CD8-positive, alpha-beta T cell (primary cell): ENCODE measurements at regions of chr7 and their contacts with region 1.

Region 1: GRCh38 chr7:107879400-107880035 is 11.5 kb upstream of the DLD start:
- DNase-seq: peak in 3 of 9 experiments; percentile 36 to 72 (median 66)
- ATAC-seq: peak; percentile 73
- H3K4me3 ChIP-seq: no peak overlapping the region
- H3K4me3 Mint-ChIP-seq: no peak overlapping the region
- H3K27ac ChIP-seq: no peak overlapping the region
- H3K27ac Mint-ChIP-seq: no peak overlapping the region
- H3K4me1 ChIP-seq: peaks cover 7% of the 10 kb centered on the region
- H3K4me1 Mint-ChIP-seq: peaks cover 18% of the 10 kb centered on the region
- H3K27me3 ChIP-seq: no peaks in the 10 kb centered on the region
- H3K27me3 Mint-ChIP-seq: peaks cover 12% of the 10 kb centered on the region
- CTCF ChIP-seq: peak; percentile 80

Region 2: GRCh38 chr7:106947244-106947728 is 932.2 kb before region 1 on chr7:
- CTCF ChIA-PET with region 1: no interaction called
- POLR2A ChIA-PET with region 1: no interaction called
- intact Hi-C with region 1: loop called in 1 of 2 experiments (anchors 10 kb)
- DNase-seq: peak in 5 of 9 experiments; percentile 1 to 67 (median 37)
- ATAC-seq: peak; percentile 66
- H3K4me3 ChIP-seq: no peak overlapping the region
- H3K4me3 Mint-ChIP-seq: no peak overlapping the region
- H3K27ac ChIP-seq: no peak overlapping the region
- H3K27ac Mint-ChIP-seq: no peak overlapping the region
- H3K4me1 ChIP-seq: no peaks in the 10 kb centered on the region
- H3K4me1 Mint-ChIP-seq: no peaks in the 10 kb centered on the region
- H3K27me3 ChIP-seq: no peaks in the 10 kb centered on the region
- H3K27me3 Mint-ChIP-seq: no peaks in the 10 kb centered on the region
- CTCF ChIP-seq: peak; percentile 39

Region 3: DNA sequence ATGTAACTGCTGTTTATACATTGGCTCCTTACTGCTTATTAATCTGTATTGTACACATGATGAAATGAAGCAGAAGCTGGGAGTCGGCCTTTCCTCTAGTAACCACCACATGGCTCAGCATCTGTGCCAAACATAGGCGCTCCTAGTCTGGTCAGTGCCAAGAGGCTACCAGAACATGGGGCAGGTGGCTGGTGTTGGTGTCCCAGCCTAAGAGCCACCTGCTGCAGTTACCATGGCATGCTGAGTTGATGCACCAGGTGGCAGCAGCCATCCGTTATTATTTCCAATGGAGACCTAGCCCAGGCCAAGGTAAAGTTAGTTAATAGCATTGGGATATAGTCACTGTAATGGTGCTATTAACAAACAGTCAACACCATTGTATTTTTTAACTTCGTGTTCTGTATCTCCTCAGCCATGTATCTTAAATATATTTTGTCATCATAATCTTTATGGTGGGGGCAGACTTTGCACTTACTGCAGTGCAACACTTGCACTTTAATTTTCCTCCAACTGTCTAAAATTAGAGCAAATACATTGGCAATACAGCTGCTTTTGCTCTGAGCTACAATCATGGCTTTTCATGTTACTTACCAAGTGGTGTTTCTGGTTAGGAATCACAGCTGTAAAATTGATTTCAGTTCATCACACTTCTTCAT is 677.6 kb before region 1 on chr7:
- CTCF ChIA-PET with region 1: interaction called, 3 read pairs
- POLR2A ChIA-PET with region 1: no interaction called
- intact Hi-C with region 1: loop called in 1 of 2 experiments (anchors 2 kb)
- DNase-seq: peak in 4 of 9 experiments; percentile 16 to 48 (median 37)
- ATAC-seq: peak; percentile 57
- H3K4me3 ChIP-seq: no peak overlapping the region
- H3K4me3 Mint-ChIP-seq: no peak overlapping the region
- H3K27ac ChIP-seq: no peak overlapping the region
- H3K27ac Mint-ChIP-seq: no peak overlapping the region
- H3K4me1 ChIP-seq: no peaks in the 10 kb centered on the region
- H3K4me1 Mint-ChIP-seq: no peaks in the 10 kb centered on the region
- H3K27me3 ChIP-seq: no peaks in the 10 kb centered on the region
- H3K27me3 Mint-ChIP-seq: no peaks in the 10 kb centered on the region
- CTCF ChIP-seq: peak; percentile 37

Region 4: GRCh38 chr7:107563775-107564552 is 315.6 kb before region 1 on chr7 and contains the starts of genes COG5 and DUS4L:
- CTCF ChIA-PET with region 1: interaction called, 3 read pairs
- POLR2A ChIA-PET with region 1: no interaction called
- intact Hi-C with region 1: loop called in 1 of 2 experiments (anchors 5 kb)
- DNase-seq: peak; percentile 73 to 93 (median 86)
- ATAC-seq: peak; percentile 83
- H3K4me3 ChIP-seq: peak within 1 kb of the TSS; percentile 91 to 97
- H3K4me3 Mint-ChIP-seq: peak within 1 kb of the TSS; percentile 80
- H3K27ac ChIP-seq: peak within 1 kb of the TSS; percentile 95 to 96
- H3K27ac Mint-ChIP-seq: peak within 1 kb of the TSS; percentile 89
- H3K4me1 ChIP-seq: peaks cover 46% of the 10 kb centered on the region
- H3K4me1 Mint-ChIP-seq: peaks cover 65% of the 10 kb centered on the region
- H3K27me3 ChIP-seq: no peaks in the 10 kb centered on the region
- H3K27me3 Mint-ChIP-seq: no peaks in the 10 kb centered on the region
- CTCF ChIP-seq: no peak
- total RNA-seq, gene COG5: 45.7 to 46.8 TPM
- total RNA-seq, gene DUS4L: 13.1 to 16.4 TPM

Region 5: DNA sequence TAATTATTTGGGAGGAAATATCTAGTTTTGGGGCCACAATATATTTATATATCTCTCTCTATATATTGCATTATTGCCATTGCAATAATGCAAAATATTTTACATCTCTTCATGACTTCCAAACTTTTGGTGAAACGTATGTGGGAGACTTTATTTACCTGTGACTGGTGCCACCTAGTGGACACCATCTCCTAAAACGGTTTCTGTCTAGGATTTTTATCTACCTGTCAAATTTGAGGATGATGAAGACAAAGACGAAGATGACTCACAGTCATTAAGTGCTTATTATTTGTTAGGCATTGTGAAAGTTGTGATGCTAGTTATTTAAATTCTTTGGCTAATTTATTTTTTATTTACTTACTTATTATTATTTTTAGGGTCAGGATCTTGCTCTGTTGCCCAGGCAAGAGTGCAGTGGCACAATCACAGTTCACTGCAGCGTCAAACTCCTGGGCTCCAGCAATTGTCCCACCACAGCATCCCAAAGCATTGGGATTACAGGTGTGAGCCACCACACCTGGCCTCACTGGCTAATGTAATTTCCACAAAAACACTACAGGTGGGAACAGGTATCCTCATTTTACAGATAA is 154.3 kb before region 1 on chr7:
- CTCF ChIA-PET with region 1: interaction called, 23 read pairs
- POLR2A ChIA-PET with region 1: no interaction called
- intact Hi-C with region 1: loop called in 1 of 2 experiments (anchors 1 kb)
- DNase-seq: peak in 8 of 9 experiments; percentile 15 to 77 (median 48)
- ATAC-seq: peak; percentile 38
- H3K4me3 ChIP-seq: no peak overlapping the region
- H3K4me3 Mint-ChIP-seq: no peak overlapping the region
- H3K27ac ChIP-seq: no peak overlapping the region
- H3K27ac Mint-ChIP-seq: no peak overlapping the region
- H3K4me1 ChIP-seq: no peaks in the 10 kb centered on the region
- H3K4me1 Mint-ChIP-seq: no peaks in the 10 kb centered on the region
- H3K27me3 ChIP-seq: no peaks in the 10 kb centered on the region
- H3K27me3 Mint-ChIP-seq: peaks cover 15% of the 10 kb centered on the region
- CTCF ChIP-seq: peak; percentile 84

Region 6: DNA sequence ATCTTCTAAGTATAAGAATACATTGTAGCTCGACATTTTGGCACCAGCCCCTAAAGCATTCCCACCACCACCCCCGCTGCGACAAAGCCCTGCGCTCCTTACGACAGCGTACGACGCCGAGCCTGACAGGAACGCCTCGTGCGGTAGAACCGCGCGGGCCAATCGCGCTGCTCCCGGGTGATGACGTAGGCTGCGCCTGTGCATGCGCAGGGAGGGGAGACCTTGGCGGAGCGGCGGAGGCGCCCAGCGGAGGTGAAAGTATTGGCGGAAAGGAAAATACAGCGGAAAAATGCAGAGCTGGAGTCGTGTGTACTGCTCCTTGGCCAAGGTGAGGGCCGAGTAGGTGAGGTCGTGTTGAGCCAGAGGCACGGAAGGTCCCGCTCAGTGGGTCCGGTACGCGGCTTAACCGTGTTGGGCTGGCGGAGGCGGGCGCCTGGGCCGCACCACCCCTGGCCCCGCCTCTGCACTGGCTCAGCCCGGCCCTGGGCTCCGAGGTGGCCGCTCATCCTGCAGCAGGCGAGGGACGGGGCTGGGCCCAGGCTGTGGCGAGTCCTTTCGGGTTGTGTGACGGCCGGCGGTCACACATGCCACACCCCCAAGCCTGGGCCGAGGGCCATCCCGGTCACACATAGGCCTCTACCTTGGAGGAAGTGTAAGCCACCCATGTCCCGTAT is 11.6 kb after region 1 on chr7 and contains the start of gene DLD:
- CTCF ChIA-PET with region 1: interaction called, 39 read pairs
- POLR2A ChIA-PET with region 1: interaction called, 4 read pairs
- intact Hi-C with region 1: loop called in 1 of 2 experiments (anchors 1 kb)
- DNase-seq: peak; percentile 86 to 97 (median 93)
- ATAC-seq: peak; percentile 97
- H3K4me3 ChIP-seq: peak within 1 kb of the TSS; percentile 79 to 86
- H3K4me3 Mint-ChIP-seq: peak within 1 kb of the TSS; percentile 98
- H3K27ac ChIP-seq: peak within 1 kb of the TSS; percentile 88 to 94
- H3K27ac Mint-ChIP-seq: peak within 1 kb of the TSS; percentile 98
- H3K4me1 ChIP-seq: peaks cover 48% of the 10 kb centered on the region
- H3K4me1 Mint-ChIP-seq: peaks cover 48% of the 10 kb centered on the region
- H3K27me3 ChIP-seq: no peaks in the 10 kb centered on the region
- H3K27me3 Mint-ChIP-seq: no peaks in the 10 kb centered on the region
- CTCF ChIP-seq: no peak
- total RNA-seq, gene DLD: 83.5 to 85.9 TPM

Region 7: DNA sequence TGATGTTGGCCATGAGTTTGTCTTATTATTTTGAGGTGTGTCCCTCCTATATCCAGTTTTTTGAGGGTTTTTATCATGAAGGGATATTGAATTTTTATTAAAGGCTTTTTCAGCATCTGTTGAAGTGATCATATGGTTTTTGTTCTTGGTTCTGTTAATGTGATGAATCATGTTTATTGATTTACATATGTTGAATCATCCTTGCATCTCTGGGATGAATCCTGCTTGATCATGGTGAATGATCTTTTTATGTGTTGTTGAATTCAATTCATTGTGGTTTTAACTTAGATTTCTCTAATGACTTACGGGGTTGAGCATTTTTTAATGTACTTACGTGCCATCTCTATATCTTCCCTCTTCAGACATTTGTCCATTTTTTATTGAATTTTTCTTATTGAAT is 34.3 kb after region 1 on chr7:
- CTCF ChIA-PET with region 1: no interaction called
- POLR2A ChIA-PET with region 1: no interaction called
- intact Hi-C with region 1: no loop called
- DNase-seq: no peak
- ATAC-seq: no peak
- H3K4me3 ChIP-seq: no peak overlapping the region
- H3K4me3 Mint-ChIP-seq: no peak overlapping the region
- H3K27ac ChIP-seq: no peak overlapping the region
- H3K27ac Mint-ChIP-seq: no peak overlapping the region
- H3K4me1 ChIP-seq: no peaks in the 10 kb centered on the region
- H3K4me1 Mint-ChIP-seq: peaks cover 20% of the 10 kb centered on the region
- H3K27me3 ChIP-seq: no peaks in the 10 kb centered on the region
- H3K27me3 Mint-ChIP-seq: no peaks in the 10 kb centered on the region
- CTCF ChIP-seq: no peak

Region 8: DNA sequence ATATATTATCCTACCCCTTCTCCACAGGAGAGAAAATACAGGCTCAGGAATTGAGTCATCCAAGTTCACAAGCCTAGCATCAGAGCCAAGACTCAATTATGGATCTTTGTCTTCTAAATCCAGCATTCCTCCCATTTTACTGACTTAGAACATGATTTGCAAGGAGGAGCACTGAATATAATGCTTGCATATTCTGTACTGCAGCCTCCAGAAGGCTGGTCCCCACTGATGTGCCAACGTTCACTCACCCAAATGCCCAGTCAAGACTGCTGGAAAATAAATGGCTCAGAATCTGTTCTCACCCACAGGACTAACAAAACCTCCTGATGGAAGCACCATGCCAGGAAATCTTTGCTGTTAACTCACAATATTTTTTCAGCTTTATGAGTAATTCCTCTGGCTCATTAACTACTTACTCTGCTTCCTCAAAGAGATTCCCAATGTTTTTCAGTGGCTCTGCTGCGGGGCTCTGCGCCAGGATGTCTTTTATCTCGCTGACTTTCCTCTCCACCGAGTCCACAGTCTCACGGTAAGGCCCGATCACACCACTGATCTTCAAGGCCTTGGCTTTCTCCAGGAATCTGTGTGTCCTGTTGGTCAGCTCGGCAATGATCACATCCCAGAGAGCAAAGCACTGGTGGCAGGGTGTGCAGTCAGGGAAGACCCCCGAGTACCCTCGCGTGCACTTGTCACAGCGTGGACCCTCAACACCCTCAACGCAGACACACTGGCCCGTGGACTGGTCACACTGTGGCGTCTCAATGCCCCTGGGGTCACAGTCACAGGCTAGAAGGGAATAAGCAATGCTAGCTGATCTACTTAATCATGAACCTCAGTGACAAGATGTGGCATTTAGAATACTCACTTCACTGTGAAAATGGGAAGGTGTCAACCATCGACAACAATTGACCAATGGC is 60.3 kb after region 1 on chr7:
- CTCF ChIA-PET with region 1: no interaction called
- POLR2A ChIA-PET with region 1: no interaction called
- intact Hi-C with region 1: no loop called
- DNase-seq: no peak
- ATAC-seq: no peak
- H3K4me3 ChIP-seq: no peak overlapping the region
- H3K4me3 Mint-ChIP-seq: no peak overlapping the region
- H3K27ac ChIP-seq: no peak overlapping the region
- H3K27ac Mint-ChIP-seq: no peak overlapping the region
- H3K4me1 ChIP-seq: no peaks in the 10 kb centered on the region
- H3K4me1 Mint-ChIP-seq: no peaks in the 10 kb centered on the region
- H3K27me3 ChIP-seq: no peaks in the 10 kb centered on the region
- H3K27me3 Mint-ChIP-seq: no peaks in the 10 kb centered on the region
- CTCF ChIP-seq: no peak

Region 9: DNA sequence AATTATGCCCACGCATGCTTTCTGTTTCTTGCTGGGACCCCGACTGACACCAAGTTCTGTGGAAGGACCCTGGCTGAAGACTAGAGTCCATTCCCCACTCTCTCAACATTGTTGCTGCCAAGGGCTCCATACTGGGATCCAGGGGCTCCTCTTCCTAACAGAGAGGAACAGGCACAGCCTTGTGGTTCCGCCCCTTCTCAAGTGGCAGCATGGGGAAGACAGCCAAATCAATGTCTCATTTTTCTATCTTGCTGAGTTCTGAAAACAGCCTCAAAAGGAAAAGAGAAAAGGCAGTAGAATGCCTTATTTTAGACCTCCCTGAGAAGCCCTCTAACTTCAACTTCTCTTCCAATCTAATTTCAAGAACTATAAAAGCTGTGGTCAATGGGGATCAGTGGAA is 147.1 kb after region 1 on chr7:
- CTCF ChIA-PET with region 1: no interaction called
- POLR2A ChIA-PET with region 1: no interaction called
- intact Hi-C with region 1: no loop called
- DNase-seq: no peak
- ATAC-seq: no peak
- H3K4me3 ChIP-seq: no peak overlapping the region
- H3K4me3 Mint-ChIP-seq: no peak overlapping the region
- H3K27ac ChIP-seq: no peak overlapping the region
- H3K27ac Mint-ChIP-seq: no peak overlapping the region
- H3K4me1 ChIP-seq: no peaks in the 10 kb centered on the region
- H3K4me1 Mint-ChIP-seq: no peaks in the 10 kb centered on the region
- H3K27me3 ChIP-seq: no peaks in the 10 kb centered on the region
- H3K27me3 Mint-ChIP-seq: peaks cover 6% of the 10 kb centered on the region
- CTCF ChIP-seq: no peak

Region 10: DNA sequence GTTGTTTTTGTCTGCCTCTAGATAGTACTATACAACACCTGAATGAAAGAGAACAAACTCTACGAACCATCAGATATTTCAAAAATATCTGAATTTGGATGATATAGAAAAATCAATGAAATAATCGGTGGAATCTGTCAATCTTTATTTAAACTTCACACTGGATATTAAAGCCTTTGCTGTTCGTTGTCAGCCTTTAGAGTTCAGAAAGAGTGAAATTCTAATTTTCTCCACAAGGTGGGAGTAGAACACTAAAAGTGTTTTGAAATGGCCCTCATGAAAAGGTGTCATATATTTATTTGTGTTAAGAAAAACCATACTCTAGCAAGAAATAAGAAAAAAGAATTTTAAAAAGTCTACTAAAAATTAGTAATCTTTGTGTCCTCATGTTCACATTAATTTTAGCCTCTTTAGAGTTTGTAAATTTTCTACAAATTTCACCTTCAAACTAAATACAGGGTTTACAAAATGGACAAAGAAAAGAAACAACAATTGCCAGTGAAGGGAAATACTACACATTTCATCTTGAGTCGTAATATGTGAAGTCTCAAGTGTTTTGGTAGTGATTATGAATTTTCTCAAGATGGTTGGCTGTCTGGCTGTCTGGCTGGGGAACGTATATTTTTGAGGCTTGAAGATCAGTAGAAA is 733.7 kb after region 1 on chr7:
- CTCF ChIA-PET with region 1: no interaction called
- POLR2A ChIA-PET with region 1: no interaction called
- intact Hi-C with region 1: no loop called
- DNase-seq: peak in 2 of 9 experiments; percentile 53 to 59
- ATAC-seq: peak; percentile 48
- H3K4me3 ChIP-seq: no peak overlapping the region
- H3K4me3 Mint-ChIP-seq: no peak overlapping the region
- H3K27ac ChIP-seq: no peak overlapping the region
- H3K27ac Mint-ChIP-seq: no peak overlapping the region
- H3K4me1 ChIP-seq: no peaks in the 10 kb centered on the region
- H3K4me1 Mint-ChIP-seq: no peaks in the 10 kb centered on the region
- H3K27me3 ChIP-seq: no peaks in the 10 kb centered on the region
- H3K27me3 Mint-ChIP-seq: no peaks in the 10 kb centered on the region
- CTCF ChIP-seq: peak; percentile 91